ENCODE measurements at regions of chr3 and their contacts with region 1.

Region 1: DNA sequence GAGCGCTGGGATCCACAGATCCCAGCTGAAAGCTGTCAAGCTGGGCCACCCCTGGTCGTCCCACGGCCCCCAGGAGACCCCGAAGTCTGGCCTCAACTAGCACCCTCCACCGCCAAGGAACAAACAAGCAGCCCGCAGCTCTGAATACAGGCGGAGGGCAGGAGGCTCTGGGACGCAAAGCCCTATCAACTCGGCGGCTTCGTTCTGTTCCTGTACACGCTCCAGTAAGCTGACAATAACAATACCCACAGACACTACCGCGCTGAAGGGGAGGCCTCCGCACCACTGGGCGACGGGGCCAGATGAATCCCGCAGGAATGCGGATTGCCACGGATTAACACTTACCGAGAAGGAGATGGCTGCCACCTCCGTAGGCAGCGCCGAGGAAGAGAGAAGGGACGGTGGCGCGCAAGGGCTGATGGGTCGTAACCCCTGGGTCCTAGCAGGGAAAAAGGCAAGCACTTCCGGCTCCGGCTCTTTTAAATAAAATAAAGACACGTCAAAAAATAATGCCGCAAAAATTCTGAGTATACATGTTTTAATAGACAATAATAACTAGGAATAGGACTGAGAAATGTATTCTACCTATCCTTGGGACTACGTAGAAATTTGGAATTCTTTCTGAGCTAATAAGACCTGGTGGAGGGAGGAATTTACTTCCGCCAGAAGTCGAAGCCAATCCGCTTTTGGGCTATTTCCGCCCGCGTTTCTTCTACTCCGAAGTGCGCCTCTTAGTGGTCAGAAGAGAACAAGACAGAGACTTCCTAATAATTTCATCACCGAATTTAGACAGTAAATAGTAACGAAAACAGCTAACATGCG is at the start of gene RPL32:
- DNase-seq: peak; percentile 90 to 97 (median 91)
- ATAC-seq: peak; percentile 82
- H3K4me3 ChIP-seq: peak within 1 kb of the TSS; percentile 85
- H3K27ac ChIP-seq: peak within 1 kb of the TSS; percentile 93
- H3K4me1 ChIP-seq: peaks cover 24 to 33% of the 10 kb centered on the region in 2 experiments; a peak in 4 of 5 replicates
- H3K27me3 ChIP-seq: no peaks in the 10 kb centered on the region
- CTCF ChIP-seq: peak; percentile 75 to 94 (median 93)
- EP300 ChIP-seq: no peak; the same call in 1 of the 2 replicates
- POLR2A ChIP-seq: peak; percentile 99
- RAD21 ChIP-seq: peak in 1 of 2 experiments; percentile 22; a peak in 2 of 4 replicates
- polyA plus RNA-seq, gene RPL32: 3,469 to 4,286 TPM

Region 2: GRCh38 chr3:12782172-12782815 is 59.1 kb before region 1 on chr3:
- CTCF ChIA-PET with region 1: no interaction called
- POLR2A ChIA-PET with region 1: interaction called, 5 read pairs
- in situ Hi-C with region 1: no loop called
- intact Hi-C with region 1: loop called (anchors 5 kb)
- DNase-seq: peak in 2 of 4 experiments; percentile 60 to 82
- ATAC-seq: peak; percentile 95
- H3K4me3 ChIP-seq: no peak overlapping the region
- H3K27ac ChIP-seq: no peak overlapping the region
- H3K4me1 ChIP-seq: peaks cover 0 to 10% of the 10 kb centered on the region in 2 experiments; a peak in 3 of 5 replicates
- H3K27me3 ChIP-seq: peaks cover 0 to 4% of the 10 kb centered on the region in 2 experiments; a peak in 1 of 5 replicates
- CTCF ChIP-seq: no peak
- EP300 ChIP-seq: no peak; the same call in 1 of the 2 replicates
- POLR2A ChIP-seq: peak; percentile 48; the same call in 1 of the 2 replicates
- RAD21 ChIP-seq: no peak

Region 3: DNA sequence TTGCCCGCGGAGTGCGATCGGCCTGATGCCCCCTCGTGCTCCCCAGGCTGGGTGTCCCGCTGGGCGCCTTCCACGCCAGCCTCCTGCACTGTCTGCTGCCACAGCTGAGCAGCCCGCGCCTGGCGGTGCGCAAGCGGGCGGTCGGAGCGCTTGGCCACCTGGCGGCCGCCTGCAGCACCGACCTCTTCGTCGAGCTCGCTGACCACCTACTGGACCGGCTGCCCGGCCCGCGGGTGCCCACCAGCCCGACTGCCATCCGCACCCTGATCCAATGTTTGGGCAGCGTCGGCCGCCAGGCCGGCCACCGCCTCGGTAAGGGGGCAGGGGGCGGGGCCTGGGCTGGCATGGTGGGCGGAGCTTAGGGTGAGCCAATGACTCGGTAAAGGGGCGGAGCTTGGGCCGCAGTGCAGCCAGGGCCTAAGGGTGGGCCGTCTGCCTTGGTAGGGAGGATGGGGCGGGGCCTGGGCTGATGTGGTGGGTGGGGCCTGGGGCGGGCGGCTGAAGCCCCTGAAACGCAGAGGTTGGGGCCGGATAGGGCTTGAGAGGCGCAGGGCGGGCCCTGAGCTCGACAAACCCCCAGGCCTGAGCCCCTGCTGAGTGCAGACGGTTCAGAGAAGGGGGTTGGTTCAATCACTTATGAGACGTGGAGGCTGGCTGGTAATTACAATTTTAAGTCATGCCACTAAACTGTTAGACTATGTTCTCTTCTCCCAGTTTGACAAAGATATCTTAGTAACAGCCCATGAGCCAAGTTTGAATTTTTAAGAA is 31.2 kb before region 1 on chr3:
- CTCF ChIA-PET with region 1: no interaction called
- POLR2A ChIA-PET with region 1: interaction called, 108 read pairs
- in situ Hi-C with region 1: no loop called
- intact Hi-C with region 1: no loop called
- DNase-seq: peak; percentile 98 to 100 (median 100)
- ATAC-seq: peak; percentile 99
- H3K4me3 ChIP-seq: peak overlapping the region; percentile 59
- H3K27ac ChIP-seq: peak overlapping the region; percentile 13; the same call in 2 of the 3 replicates
- H3K4me1 ChIP-seq: peaks cover 9 to 20% of the 10 kb centered on the region in 2 experiments; a peak in 4 of 5 replicates
- H3K27me3 ChIP-seq: no peaks in the 10 kb centered on the region
- CTCF ChIP-seq: peak; percentile 78 to 93 (median 93)
- EP300 ChIP-seq: no peak
- POLR2A ChIP-seq: peak; percentile 64; the same call in 1 of the 2 replicates
- RAD21 ChIP-seq: peak; percentile 61 to 70

Region 4: DNA sequence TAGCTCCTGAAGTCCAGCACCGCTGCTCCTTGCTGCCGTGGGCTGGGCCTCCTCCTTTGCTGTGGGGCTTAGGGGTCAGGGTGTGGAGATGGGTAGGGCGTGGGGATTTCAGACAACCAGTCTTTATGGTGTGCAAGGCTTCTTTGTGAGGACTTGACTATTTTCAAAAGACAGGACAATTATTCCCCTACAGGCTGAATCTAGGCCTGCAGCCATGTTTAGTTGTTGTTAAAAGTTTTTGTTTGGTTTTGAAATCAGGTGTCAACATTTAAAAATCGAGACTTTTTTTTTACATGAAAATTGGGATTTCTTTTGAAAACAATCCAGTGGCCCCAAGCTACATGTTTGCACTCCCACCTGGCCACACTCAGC is 10.6 kb before region 1 on chr3:
- CTCF ChIA-PET with region 1: no interaction called
- POLR2A ChIA-PET with region 1: interaction called, 70 read pairs
- in situ Hi-C with region 1: no loop called
- intact Hi-C with region 1: no loop called
- DNase-seq: peak in 1 of 4 experiments; percentile 41
- ATAC-seq: peak; percentile 11
- H3K4me3 ChIP-seq: no peak overlapping the region
- H3K27ac ChIP-seq: no peak overlapping the region; the same call in 2 of the 3 replicates
- H3K4me1 ChIP-seq: no peaks in the 10 kb centered on the region; a peak in 1 of 5 replicates
- H3K27me3 ChIP-seq: no peaks in the 10 kb centered on the region
- CTCF ChIP-seq: peak in 2 of 3 experiments; percentile 34 to 39; a peak in 2 of 6 replicates
- EP300 ChIP-seq: no peak
- POLR2A ChIP-seq: no peak
- RAD21 ChIP-seq: no peak

Region 5: GRCh38 chr3:12868039-12869034 is 27.0 kb after region 1 on chr3:
- CTCF ChIA-PET with region 1: interaction called, 3 read pairs
- POLR2A ChIA-PET with region 1: interaction called, 10 read pairs
- in situ Hi-C with region 1: no loop called
- intact Hi-C with region 1: no loop called
- DNase-seq: peak; percentile 85 to 97 (median 86)
- ATAC-seq: peak; percentile 89
- H3K4me3 ChIP-seq: peak overlapping the region; percentile 47
- H3K27ac ChIP-seq: peak overlapping the region; percentile 79
- H3K4me1 ChIP-seq: peaks cover 8 to 22% of the 10 kb centered on the region in 2 experiments
- H3K27me3 ChIP-seq: no peaks in the 10 kb centered on the region
- CTCF ChIP-seq: peak; percentile 92 to 98 (median 96)
- EP300 ChIP-seq: peak; percentile 45
- POLR2A ChIP-seq: peak; percentile 69
- RAD21 ChIP-seq: peak; percentile 98 to 99

Region 6: DNA sequence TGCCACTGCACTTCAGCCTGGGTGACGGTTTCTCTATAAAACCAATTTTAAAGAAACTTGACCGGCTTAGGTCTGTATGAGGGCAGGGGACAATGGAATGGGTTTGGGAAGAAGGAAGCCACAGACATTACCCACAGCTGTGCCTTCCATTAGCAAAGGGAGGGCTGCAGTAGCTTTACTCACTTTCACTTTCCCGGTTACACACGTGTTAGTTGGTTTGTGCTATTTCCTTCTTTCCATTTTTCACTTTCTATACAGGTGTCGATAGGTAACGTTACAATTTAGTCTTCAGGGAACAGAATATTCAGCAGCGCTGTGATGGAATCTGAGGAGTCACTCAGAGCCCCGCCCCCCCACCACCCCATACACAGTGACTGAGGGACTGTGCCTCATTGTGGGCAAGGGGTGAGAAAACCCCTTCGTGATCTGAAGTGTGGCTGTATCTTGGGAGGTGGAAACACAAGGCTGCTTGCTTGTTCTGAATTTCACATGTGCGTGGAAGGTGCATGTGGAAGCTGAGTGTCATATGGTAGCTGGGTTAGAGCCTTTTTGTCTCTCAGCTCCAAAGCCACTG is 44.8 kb after region 1 on chr3:
- CTCF ChIA-PET with region 1: no interaction called
- POLR2A ChIA-PET with region 1: interaction called, 12 read pairs
- in situ Hi-C with region 1: no loop called
- intact Hi-C with region 1: no loop called
- DNase-seq: peak in 1 of 4 experiments; percentile 17
- ATAC-seq: peak; percentile 14; the same call in 2 of the 3 replicates
- H3K4me3 ChIP-seq: no peak overlapping the region
- H3K27ac ChIP-seq: no peak overlapping the region
- H3K4me1 ChIP-seq: peaks cover 23 to 50% of the 10 kb centered on the region in 2 experiments; a peak in 4 of 5 replicates
- H3K27me3 ChIP-seq: no peaks in the 10 kb centered on the region
- CTCF ChIP-seq: no peak
- EP300 ChIP-seq: no peak
- POLR2A ChIP-seq: no peak
- RAD21 ChIP-seq: no peak

Measured in K562 (cell line).